K562 (cell line): ENCODE measurements at regions of chr6 and their contacts with region 1.

Region 1: GRCh38 chr6:125790358-125791150 is at the start of gene NCOA7:
- DNase-seq: peak; percentile 78 to 88 (median 84)
- ATAC-seq: peak; percentile 84
- H3K4me3 ChIP-seq: peak within 1 kb of the TSS; percentile 82
- H3K27ac ChIP-seq: peak within 1 kb of the TSS; percentile 96
- H3K4me1 ChIP-seq: peaks cover 17 to 18% of the 10 kb centered on the region in 2 experiments
- H3K27me3 ChIP-seq: no peaks in the 10 kb centered on the region
- CTCF ChIP-seq: peak in 1 of 3 experiments; percentile 10; a peak in 1 of 6 replicates
- EP300 ChIP-seq: no peak
- POLR2A ChIP-seq: peak; percentile 63
- RAD21 ChIP-seq: 0 out of 4 replicates have a peak, but pooled peaks of 1 of the 2 experiments have one; percentile 9
- polyA plus RNA-seq, gene NCOA7: 5.8 to 7.0 TPM

Region 2: GRCh38 chr6:125325586-125325985 is 465.0 kb before region 1 on chr6:
- CTCF ChIA-PET with region 1: no interaction called
- POLR2A ChIA-PET with region 1: no interaction called
- in situ Hi-C with region 1: no loop called
- intact Hi-C with region 1: no loop called
- DNase-seq: no peak
- ATAC-seq: no peak
- H3K4me3 ChIP-seq: no peak overlapping the region
- H3K27ac ChIP-seq: no peak overlapping the region
- H3K4me1 ChIP-seq: no peaks in the 10 kb centered on the region
- H3K27me3 ChIP-seq: peaks cover 3 to 10% of the 10 kb centered on the region in 2 experiments; a peak in 4 of 5 replicates
- CTCF ChIP-seq: no peak
- EP300 ChIP-seq: no peak
- POLR2A ChIP-seq: no peak
- RAD21 ChIP-seq: no peak

Region 3: GRCh38 chr6:125802943-125803377 is 12.4 kb after region 1 on chr6:
- CTCF ChIA-PET with region 1: no interaction called
- POLR2A ChIA-PET with region 1: interaction called, 10 read pairs
- in situ Hi-C with region 1: no loop called
- intact Hi-C with region 1: no loop called
- DNase-seq: no peak
- ATAC-seq: no peak
- H3K4me3 ChIP-seq: no peak overlapping the region
- H3K27ac ChIP-seq: no peak overlapping the region
- H3K4me1 ChIP-seq: peaks cover 0 to 3% of the 10 kb centered on the region in 2 experiments; a peak in 1 of 5 replicates
- H3K27me3 ChIP-seq: no peaks in the 10 kb centered on the region
- CTCF ChIP-seq: no peak
- EP300 ChIP-seq: no peak
- POLR2A ChIP-seq: no peak
- RAD21 ChIP-seq: no peak

Region 4: DNA sequence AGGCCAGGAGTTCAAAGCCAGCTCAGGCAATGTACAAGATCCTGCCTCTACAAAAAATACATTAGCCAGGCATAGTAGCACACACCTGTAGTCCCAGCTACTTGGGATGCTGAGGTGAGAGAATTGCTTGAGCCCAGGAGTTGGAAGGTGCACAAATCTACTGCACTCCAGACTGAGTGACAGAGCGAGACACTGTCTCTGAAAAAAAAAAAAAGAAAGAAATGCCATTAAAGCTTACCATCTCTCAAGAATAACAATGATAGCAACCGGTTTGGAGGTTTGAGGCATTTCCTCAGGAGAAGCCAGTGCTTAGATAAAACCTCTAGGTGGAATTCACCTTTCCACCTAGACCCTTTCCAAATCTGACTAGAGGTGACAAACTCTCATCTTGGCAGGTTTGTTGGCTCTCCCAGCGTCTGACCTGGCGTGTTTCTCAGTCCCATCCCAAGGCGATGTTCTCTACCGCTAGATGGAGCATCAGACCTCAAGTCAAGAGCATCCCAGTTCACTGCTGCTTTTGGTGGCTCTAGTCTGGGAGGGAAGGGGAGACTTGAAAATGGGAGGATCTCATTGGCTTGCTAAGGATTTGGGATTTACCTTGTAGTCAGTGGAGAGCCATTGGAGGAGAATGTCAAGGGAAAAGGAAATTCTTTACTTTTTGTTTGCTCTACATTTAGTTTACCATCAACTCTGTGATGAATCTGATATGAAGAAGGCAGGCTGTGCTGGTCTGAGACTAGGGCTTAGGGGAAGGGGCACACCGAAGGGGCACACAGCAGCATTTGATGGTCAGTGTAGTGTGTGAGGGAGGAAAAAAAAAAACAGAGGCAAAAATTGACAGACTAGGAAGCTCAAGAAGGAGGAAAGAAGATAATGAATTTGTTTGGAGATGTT is 68.1 kb after region 1 on chr6:
- CTCF ChIA-PET with region 1: no interaction called
- POLR2A ChIA-PET with region 1: interaction called, 5 read pairs
- in situ Hi-C with region 1: no loop called
- intact Hi-C with region 1: loop called (anchors 2 kb)
- DNase-seq: peak; percentile 40 to 85 (median 65)
- ATAC-seq: peak; percentile 98
- H3K4me3 ChIP-seq: no peak overlapping the region
- H3K27ac ChIP-seq: no peak overlapping the region
- H3K4me1 ChIP-seq: no peaks in the 10 kb centered on the region; a peak in 1 of 5 replicates
- H3K27me3 ChIP-seq: no peaks in the 10 kb centered on the region
- CTCF ChIP-seq: peak; percentile 85 to 90 (median 89)
- EP300 ChIP-seq: no peak
- POLR2A ChIP-seq: no peak
- RAD21 ChIP-seq: peak; percentile 72 to 86

Region 5: GRCh38 chr6:125974214-125974866 is 183.8 kb after region 1 on chr6:
- CTCF ChIA-PET with region 1: interaction called, 8 read pairs
- POLR2A ChIA-PET with region 1: interaction called, 3 read pairs
- in situ Hi-C with region 1: loop called (anchors 5 kb)
- intact Hi-C with region 1: no loop called
- DNase-seq: peak in 3 of 4 experiments; percentile 39 to 64 (median 41)
- ATAC-seq: peak; percentile 90
- H3K4me3 ChIP-seq: no peak overlapping the region
- H3K27ac ChIP-seq: no peak overlapping the region
- H3K4me1 ChIP-seq: no peaks in the 10 kb centered on the region
- H3K27me3 ChIP-seq: no peaks in the 10 kb centered on the region
- CTCF ChIP-seq: peak; percentile 45 to 80 (median 50); a peak in 5 of 6 replicates
- EP300 ChIP-seq: peak; percentile 23; the same call in 1 of the 2 replicates
- POLR2A ChIP-seq: no peak
- RAD21 ChIP-seq: peak; percentile 81 to 84

Region 6: GRCh38 chr6:126156973-126157372 is 366.4 kb after region 1 on chr6:
- CTCF ChIA-PET with region 1: no interaction called
- POLR2A ChIA-PET with region 1: no interaction called
- in situ Hi-C with region 1: no loop called
- intact Hi-C with region 1: no loop called
- DNase-seq: peak in 2 of 4 experiments; percentile 11 to 15
- ATAC-seq: peak; percentile 65
- H3K4me3 ChIP-seq: no peak overlapping the region
- H3K27ac ChIP-seq: no peak overlapping the region
- H3K4me1 ChIP-seq: peaks cover 3 to 11% of the 10 kb centered on the region in 2 experiments; a peak in 3 of 5 replicates
- H3K27me3 ChIP-seq: no peaks in the 10 kb centered on the region
- CTCF ChIP-seq: no peak
- EP300 ChIP-seq: no peak
- POLR2A ChIP-seq: no peak
- RAD21 ChIP-seq: no peak